PC-3 (cell line): ENCODE measurements at regions of chr15 and their contacts with region 1.

Region 1: DNA sequence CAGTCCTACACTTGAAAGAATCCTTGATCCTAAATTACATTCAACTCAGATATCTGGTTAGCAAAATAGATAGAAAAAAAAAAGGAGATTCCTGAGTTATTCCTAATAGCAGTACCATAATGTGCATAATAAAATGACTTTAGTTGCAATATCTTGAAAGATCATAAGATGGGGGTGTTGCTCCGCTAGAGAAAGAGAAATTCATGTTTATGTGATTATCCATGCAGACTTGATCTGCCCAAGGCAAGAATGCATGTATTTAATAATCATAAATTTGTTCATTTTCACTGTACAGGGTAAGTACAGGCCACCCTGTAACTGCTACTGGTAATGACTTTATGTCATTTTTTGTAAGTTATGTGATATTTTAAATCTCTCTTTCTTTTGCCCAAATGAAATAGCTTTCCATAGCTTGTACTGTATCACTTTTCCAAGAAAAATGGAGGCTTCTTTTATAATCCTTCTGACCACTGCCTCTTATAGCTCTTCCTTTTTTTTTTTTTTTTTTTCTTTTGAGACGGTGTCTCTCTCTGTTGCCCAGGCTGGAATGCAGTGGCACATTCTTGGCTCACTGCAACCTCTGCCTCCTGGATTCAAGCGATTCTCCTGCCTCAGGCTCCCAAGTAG is 84.6 kb downstream of the HCN4 start:
- DNase-seq: peak; percentile 55
- ATAC-seq: peak; percentile 42; the same call in 1 of the 2 replicates
- H3K4me3 ChIP-seq: no peak overlapping the region
- H3K27ac ChIP-seq: no peak overlapping the region
- H3K4me1 ChIP-seq: no peaks in the 10 kb centered on the region
- H3K27me3 ChIP-seq: no peaks in the 10 kb centered on the region
- CTCF ChIP-seq: peak; percentile 63

Region 2: GRCh38 chr15:73226093-73226814 is 57.9 kb before region 1 on chr15:
- CTCF ChIA-PET with region 1: no interaction called
- POLR2A ChIA-PET with region 1: no interaction called
- intact Hi-C with region 1: no loop called
- DNase-seq: no peak
- ATAC-seq: no peak
- H3K4me3 ChIP-seq: no peak overlapping the region
- H3K27ac ChIP-seq: no peak overlapping the region
- H3K4me1 ChIP-seq: no peaks in the 10 kb centered on the region
- H3K27me3 ChIP-seq: 0 out of 2 replicates have a peak, but pooled peaks cover 4% of the 10 kb centered on the region
- CTCF ChIP-seq: no peak

Region 3: DNA sequence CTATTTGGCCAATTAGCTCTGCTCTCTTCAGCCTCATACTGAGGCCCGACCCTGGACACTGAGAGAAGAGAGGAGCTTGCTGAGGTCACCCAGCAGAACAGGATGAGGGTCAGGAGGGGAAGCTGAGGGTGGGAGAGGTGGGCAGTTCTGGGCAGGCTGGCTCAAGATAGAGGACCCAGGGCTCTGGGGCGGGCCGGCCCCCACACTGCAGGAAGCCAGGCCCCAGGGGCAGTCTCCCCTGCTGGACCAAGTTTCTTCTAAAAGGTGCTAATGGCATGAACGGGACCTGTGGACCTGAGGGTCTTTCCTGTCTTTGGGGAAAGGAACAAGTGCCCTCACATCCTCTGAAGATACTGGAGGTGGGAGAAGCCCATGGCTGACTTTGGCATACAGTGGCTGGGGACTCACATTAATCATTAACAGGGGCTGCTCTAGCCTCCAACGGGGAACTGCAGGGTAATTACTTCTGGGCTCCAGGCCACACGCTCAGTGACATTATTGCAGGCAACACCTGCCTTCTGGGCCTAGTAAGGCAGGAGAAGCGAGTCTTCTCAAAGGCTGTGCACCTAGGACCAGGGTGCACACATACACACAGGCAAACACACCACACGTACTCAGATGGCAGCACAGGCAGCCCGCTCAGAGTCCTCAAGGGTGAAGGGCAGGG is 73.9 kb after region 1 on chr15:
- CTCF ChIA-PET with region 1: no interaction called
- POLR2A ChIA-PET with region 1: no interaction called
- intact Hi-C with region 1: no loop called
- DNase-seq: no peak
- ATAC-seq: no peak
- H3K4me3 ChIP-seq: no peak overlapping the region
- H3K27ac ChIP-seq: no peak overlapping the region
- H3K4me1 ChIP-seq: no peaks in the 10 kb centered on the region
- H3K27me3 ChIP-seq: peaks cover 81% of the 10 kb centered on the region
- CTCF ChIP-seq: no peak

Region 4: GRCh38 chr15:73550190-73550589 is 266.0 kb after region 1 on chr15:
- CTCF ChIA-PET with region 1: no interaction called
- POLR2A ChIA-PET with region 1: no interaction called
- intact Hi-C with region 1: loop called (anchors 10 kb)
- DNase-seq: no peak
- ATAC-seq: no peak
- H3K4me3 ChIP-seq: no peak overlapping the region
- H3K27ac ChIP-seq: no peak overlapping the region
- H3K4me1 ChIP-seq: no peaks in the 10 kb centered on the region
- H3K27me3 ChIP-seq: no peaks in the 10 kb centered on the region
- CTCF ChIP-seq: no peak